ENCODE measurements at regions of chr3 and their contacts with region 1.

Region 1: GRCh38 chr3:178436773-178437172 is 99.5 kb upstream of the KCNMB2 start:
- DNase-seq: peak; percentile 65
- H3K4me3 ChIP-seq: no peak overlapping the region
- H3K27ac ChIP-seq: no peak overlapping the region
- H3K4me1 ChIP-seq: peaks cover 24% of the 10 kb centered on the region
- H3K27me3 ChIP-seq: no peaks in the 10 kb centered on the region
- CTCF ChIP-seq: peak; percentile 77

Region 2: DNA sequence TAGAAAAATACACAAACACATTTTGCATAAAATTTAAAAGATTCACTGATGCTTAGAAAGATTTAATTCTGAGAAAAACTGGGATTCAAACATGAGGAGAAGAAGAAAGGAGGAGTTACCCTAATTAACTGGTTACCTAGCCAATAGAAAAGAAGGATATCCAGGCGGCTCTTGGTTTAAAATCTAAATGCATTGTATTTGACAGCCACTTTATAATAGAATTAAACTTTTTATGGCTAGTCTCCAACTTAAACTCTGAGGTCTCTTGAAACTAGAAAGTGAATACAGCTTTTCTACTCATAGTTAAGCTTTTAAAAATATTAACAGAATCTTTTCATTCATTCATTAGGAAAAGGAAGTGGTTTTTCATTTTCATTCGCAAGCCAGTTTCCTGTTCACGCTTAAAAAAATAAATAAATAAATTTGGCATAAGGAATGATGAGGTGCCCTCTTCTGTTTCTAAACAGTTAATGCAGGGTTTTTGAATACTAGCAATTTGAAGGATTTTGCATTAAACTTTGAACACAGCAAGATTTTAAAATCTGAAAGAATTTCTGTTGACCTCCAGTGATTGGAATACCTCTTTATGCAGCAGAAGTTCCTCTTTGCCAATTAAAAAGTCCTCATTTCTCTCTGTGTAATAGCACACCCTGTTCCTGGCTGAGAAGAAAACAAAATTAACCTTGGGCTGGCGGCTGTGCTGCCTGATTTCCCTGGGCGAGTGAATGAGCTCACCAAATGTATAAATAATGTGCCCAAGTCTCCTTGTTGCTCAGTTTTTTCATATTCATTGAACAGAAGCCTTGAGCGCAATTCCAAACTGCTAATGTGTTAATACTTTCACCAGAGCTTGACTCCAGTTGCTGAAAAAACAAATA is 529.8 kb after region 1 on chr3:
- CTCF ChIA-PET with region 1: interaction called, 15 read pairs
- POLR2A ChIA-PET with region 1: no interaction called
- intact Hi-C with region 1: loop called (anchors 1 kb)
- DNase-seq: peak; percentile 89
- H3K4me3 ChIP-seq: peak overlapping the region; percentile 17
- H3K27ac ChIP-seq: peak overlapping the region; percentile 89
- H3K4me1 ChIP-seq: peaks cover 32% of the 10 kb centered on the region
- H3K27me3 ChIP-seq: no peaks in the 10 kb centered on the region
- CTCF ChIP-seq: peak; percentile 75